IMR-90 (cell line): ENCODE measurements at regions of chr13 and their contacts with region 1.

Region 1: DNA sequence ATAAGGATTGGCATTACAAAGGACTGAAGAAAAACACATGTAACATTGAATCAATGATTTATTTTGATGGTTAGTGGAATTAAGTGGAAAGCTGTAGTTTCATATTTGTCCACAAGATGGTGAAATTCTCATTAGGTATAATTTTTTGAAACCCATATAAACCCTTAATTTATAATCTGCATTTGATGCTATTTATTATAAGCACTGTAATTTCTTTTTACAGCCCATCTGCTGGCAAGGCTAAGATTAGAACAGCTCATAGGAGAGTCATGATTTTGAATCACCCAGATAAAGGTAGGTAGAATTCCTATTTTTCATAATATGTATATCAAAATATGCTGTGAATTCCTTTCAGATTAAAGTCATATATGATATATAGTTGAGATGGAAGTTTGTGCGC is 62.2 kb downstream of the DNAJC15 start:
- DNase-seq: peak; percentile 61
- ATAC-seq: peak; percentile 51; the same call in 1 of the 2 replicates
- H3K4me3 ChIP-seq: no peak overlapping the region
- H3K27ac ChIP-seq: no peak overlapping the region
- H3K4me1 ChIP-seq: peaks cover 1% of the 10 kb centered on the region; the same call in 1 of the 2 replicates
- H3K27me3 ChIP-seq: no peaks in the 10 kb centered on the region
- CTCF ChIP-seq: peak; percentile 63
- POLR2A ChIP-seq: no peak
- RAD21 ChIP-seq: peak; percentile 68

Region 2: GRCh38 chr13:42594970-42595571 is 490.5 kb before region 1 on chr13:
- CTCF ChIA-PET with region 1: no interaction called
- POLR2A ChIA-PET with region 1: no interaction called
- dilution Hi-C with region 1: no loop called
- in situ Hi-C with region 1: loop called (anchors 10 kb)
- intact Hi-C with region 1: loop called (anchors 5 kb)
- DNase-seq: peak; percentile 66
- ATAC-seq: peak; percentile 93
- H3K4me3 ChIP-seq: no peak overlapping the region
- H3K27ac ChIP-seq: no peak overlapping the region
- H3K4me1 ChIP-seq: no peaks in the 10 kb centered on the region
- H3K27me3 ChIP-seq: peaks cover 32% of the 10 kb centered on the region
- CTCF ChIP-seq: peak; percentile 81
- POLR2A ChIP-seq: no peak
- RAD21 ChIP-seq: peak; percentile 85

Region 3: GRCh38 chr13:42740753-42741152 is 344.8 kb before region 1 on chr13:
- CTCF ChIA-PET with region 1: interaction called, 11 read pairs
- POLR2A ChIA-PET with region 1: no interaction called
- dilution Hi-C with region 1: no loop called
- in situ Hi-C with region 1: no loop called
- intact Hi-C with region 1: no loop called
- DNase-seq: no peak
- ATAC-seq: no peak
- H3K4me3 ChIP-seq: no peak overlapping the region
- H3K27ac ChIP-seq: no peak overlapping the region
- H3K4me1 ChIP-seq: peaks cover 3% of the 10 kb centered on the region
- H3K27me3 ChIP-seq: no peaks in the 10 kb centered on the region
- CTCF ChIP-seq: no peak
- POLR2A ChIP-seq: no peak
- RAD21 ChIP-seq: no peak

Region 4: DNA sequence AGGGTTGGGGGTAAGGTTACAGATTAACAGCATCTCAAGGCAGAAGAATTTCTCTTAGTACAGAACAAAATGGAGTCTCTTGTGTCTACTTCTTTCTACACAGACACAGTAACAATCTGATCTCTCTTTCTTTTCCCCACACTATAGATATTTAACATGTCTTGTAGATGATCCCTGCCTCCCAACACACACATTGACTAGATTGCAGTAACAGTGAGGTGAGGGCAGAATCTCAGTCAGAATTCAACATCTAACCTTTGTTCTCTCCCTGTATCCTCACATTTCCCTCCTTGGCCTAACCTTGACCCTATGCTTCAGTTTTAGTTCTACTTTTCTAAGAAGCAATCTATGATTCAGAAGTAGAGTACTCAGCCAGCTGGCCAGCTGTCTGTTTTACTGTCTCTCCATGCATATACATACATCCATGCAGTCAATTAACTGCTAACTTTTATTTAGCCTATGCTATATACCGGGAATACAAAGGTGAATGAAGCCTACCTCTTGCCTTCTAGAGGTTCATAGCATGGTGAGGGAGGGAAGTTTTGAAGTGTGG is 44.1 kb before region 1 on chr13:
- CTCF ChIA-PET with region 1: no interaction called
- POLR2A ChIA-PET with region 1: no interaction called
- dilution Hi-C with region 1: no loop called
- in situ Hi-C with region 1: no loop called
- intact Hi-C with region 1: no loop called
- DNase-seq: peak; percentile 24
- ATAC-seq: peak; percentile 71
- H3K4me3 ChIP-seq: no peak overlapping the region
- H3K27ac ChIP-seq: no peak overlapping the region
- H3K4me1 ChIP-seq: peaks cover 4% of the 10 kb centered on the region; the same call in 1 of the 2 replicates
- H3K27me3 ChIP-seq: no peaks in the 10 kb centered on the region
- CTCF ChIP-seq: no peak
- POLR2A ChIP-seq: no peak
- RAD21 ChIP-seq: no peak

Region 5: GRCh38 chr13:43303033-43303729 is 217.6 kb after region 1 on chr13:
- CTCF ChIA-PET with region 1: interaction called, 3 read pairs
- POLR2A ChIA-PET with region 1: no interaction called
- dilution Hi-C with region 1: no loop called
- in situ Hi-C with region 1: no loop called
- intact Hi-C with region 1: loop called (anchors 1 kb)
- DNase-seq: peak; percentile 70
- ATAC-seq: peak; percentile 68
- H3K4me3 ChIP-seq: no peak overlapping the region
- H3K27ac ChIP-seq: peak overlapping the region; percentile 2; the same call in 1 of the 2 replicates
- H3K4me1 ChIP-seq: peaks cover 13% of the 10 kb centered on the region
- H3K27me3 ChIP-seq: no peaks in the 10 kb centered on the region
- CTCF ChIP-seq: peak; percentile 59
- POLR2A ChIP-seq: no peak
- RAD21 ChIP-seq: peak; percentile 64

Region 6: GRCh38 chr13:43804461-43805070 is 719.0 kb after region 1 on chr13:
- CTCF ChIA-PET with region 1: interaction called, 4 read pairs
- POLR2A ChIA-PET with region 1: no interaction called
- dilution Hi-C with region 1: no loop called
- in situ Hi-C with region 1: loop called (anchors 10 kb)
- intact Hi-C with region 1: loop called (anchors 2 kb)
- DNase-seq: peak; percentile 78
- ATAC-seq: peak; percentile 82
- H3K4me3 ChIP-seq: peak overlapping the region; percentile 3; the same call in 1 of the 2 replicates
- H3K27ac ChIP-seq: peak overlapping the region; percentile 50; the same call in 1 of the 2 replicates
- H3K4me1 ChIP-seq: peaks cover 2% of the 10 kb centered on the region; the same call in 1 of the 2 replicates
- H3K27me3 ChIP-seq: no peaks in the 10 kb centered on the region
- CTCF ChIP-seq: peak; percentile 64
- POLR2A ChIP-seq: no peak
- RAD21 ChIP-seq: peak; percentile 64